ENCODE measurements at regions of chr14 and their contacts with region 1.

Region 1: GRCh38 chr14:72893636-72894321 is at the start of gene DPF3:
- DNase-seq: peak; percentile 97 to 98
- ATAC-seq: peak; percentile 94 to 98 (median 96)
- H3K4me3 ChIP-seq: peak within 1 kb of the TSS; percentile 96
- H3K27ac ChIP-seq: peak within 1 kb of the TSS; percentile 92
- H3K4me1 ChIP-seq: peaks cover 36% of the 10 kb centered on the region
- H3K27me3 ChIP-seq: peaks cover 0 to 7% (median 0%) of the 10 kb centered on the region in 3 donors
- CTCF ChIP-seq: no peak
- total RNA-seq, gene DPF3: 19.4 to 25.3 (median 23.1) TPM

Region 2: GRCh38 chr14:72617391-72618031 is 276.3 kb before region 1 on chr14:
- intact Hi-C with region 1: loop called in 1 of 2 experiments (anchors 5 kb)
- DNase-seq: peak in 1 of 2 donors; percentile 35
- ATAC-seq: peak; percentile 67 to 81 (median 72)
- H3K4me3 ChIP-seq: peak overlapping the region; percentile 34
- H3K27ac ChIP-seq: peak overlapping the region; percentile 88
- H3K4me1 ChIP-seq: peaks cover 56% of the 10 kb centered on the region
- H3K27me3 ChIP-seq: no peaks in the 10 kb centered on the region
- CTCF ChIP-seq: no peak

Region 3: GRCh38 chr14:72745991-72746980 is 147.5 kb before region 1 on chr14:
- intact Hi-C with region 1: loop called in 1 of 2 experiments (anchors 5 kb)
- DNase-seq: peak; percentile 50 to 73
- ATAC-seq: peak; percentile 64 to 89 (median 85)
- H3K4me3 ChIP-seq: no peak overlapping the region
- H3K27ac ChIP-seq: peak overlapping the region; percentile 27
- H3K4me1 ChIP-seq: peaks cover 27% of the 10 kb centered on the region
- H3K27me3 ChIP-seq: no peaks in the 10 kb centered on the region
- CTCF ChIP-seq: no peak

Region 4: GRCh38 chr14:72792051-72792788 is 101.6 kb before region 1 on chr14:
- intact Hi-C with region 1: loop called in 1 of 2 experiments (anchors 5 kb)
- DNase-seq: peak; percentile 53 to 81
- ATAC-seq: peak; percentile 72 to 83 (median 81)
- H3K4me3 ChIP-seq: peak overlapping the region; percentile 24
- H3K27ac ChIP-seq: peak overlapping the region; percentile 84
- H3K4me1 ChIP-seq: peaks cover 56% of the 10 kb centered on the region
- H3K27me3 ChIP-seq: no peaks in the 10 kb centered on the region
- CTCF ChIP-seq: no peak

Region 5: DNA sequence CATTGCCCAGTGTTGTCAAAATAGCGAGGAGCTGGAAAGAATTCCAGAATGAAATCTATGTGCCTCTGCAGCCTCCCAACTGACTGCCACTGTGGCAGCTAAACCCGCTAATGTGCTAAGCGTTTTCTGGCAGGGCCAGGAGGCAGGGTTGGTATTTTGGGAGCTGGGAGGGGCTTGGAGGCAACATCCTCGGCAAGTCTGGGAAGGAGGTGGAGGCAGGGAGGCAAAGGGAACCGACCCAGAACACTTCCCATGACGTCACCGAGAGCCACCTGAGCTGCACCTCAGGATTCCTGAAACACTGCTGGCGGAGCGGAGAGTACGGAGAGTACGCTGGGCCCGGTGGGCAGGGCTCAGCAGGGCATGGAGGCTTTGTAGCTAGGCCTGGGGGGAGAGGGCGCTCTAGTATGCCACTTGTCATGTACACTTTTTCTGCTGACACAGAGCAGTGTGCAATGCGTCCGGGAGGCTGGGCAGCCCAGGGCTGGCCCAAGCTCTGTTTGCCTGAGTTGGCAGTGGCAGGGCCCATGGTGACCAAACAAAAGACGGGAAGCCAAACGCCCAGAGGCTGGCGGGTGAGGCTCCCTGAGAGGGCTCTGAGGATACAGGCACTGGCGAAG is 81.4 kb before region 1 on chr14:
- intact Hi-C with region 1: loop called in 1 of 2 experiments (anchors 5 kb)
- DNase-seq: peak; percentile 84 to 95
- ATAC-seq: peak; percentile 91 to 94 (median 92)
- H3K4me3 ChIP-seq: peak overlapping the region; percentile 33
- H3K27ac ChIP-seq: peak overlapping the region; percentile 87
- H3K4me1 ChIP-seq: peaks cover 72% of the 10 kb centered on the region
- H3K27me3 ChIP-seq: no peaks in the 10 kb centered on the region
- CTCF ChIP-seq: no peak